ENCODE measurements at regions of chr18 and their contacts with region 1.

Region 1: GRCh38 chr18:51668101-51668500 is 470.6 kb upstream of the MEX3C start:
- DNase-seq: peak; percentile 67 to 81
- H3K4me3 ChIP-seq: no peak overlapping the region
- H3K27ac ChIP-seq: no peak overlapping the region
- H3K4me1 ChIP-seq: peaks cover 0 to 4% (median 0%) of the 10 kb centered on the region in 4 donors
- H3K27me3 ChIP-seq: peaks cover 0 to 25% (median 4%) of the 10 kb centered on the region in 3 donors
- CTCF ChIP-seq: peak in 5 of 7 experiments; percentile 39 to 74 (median 60)
- EP300 ChIP-seq: no peak
- POLR2A ChIP-seq: no peak

Region 2: DNA sequence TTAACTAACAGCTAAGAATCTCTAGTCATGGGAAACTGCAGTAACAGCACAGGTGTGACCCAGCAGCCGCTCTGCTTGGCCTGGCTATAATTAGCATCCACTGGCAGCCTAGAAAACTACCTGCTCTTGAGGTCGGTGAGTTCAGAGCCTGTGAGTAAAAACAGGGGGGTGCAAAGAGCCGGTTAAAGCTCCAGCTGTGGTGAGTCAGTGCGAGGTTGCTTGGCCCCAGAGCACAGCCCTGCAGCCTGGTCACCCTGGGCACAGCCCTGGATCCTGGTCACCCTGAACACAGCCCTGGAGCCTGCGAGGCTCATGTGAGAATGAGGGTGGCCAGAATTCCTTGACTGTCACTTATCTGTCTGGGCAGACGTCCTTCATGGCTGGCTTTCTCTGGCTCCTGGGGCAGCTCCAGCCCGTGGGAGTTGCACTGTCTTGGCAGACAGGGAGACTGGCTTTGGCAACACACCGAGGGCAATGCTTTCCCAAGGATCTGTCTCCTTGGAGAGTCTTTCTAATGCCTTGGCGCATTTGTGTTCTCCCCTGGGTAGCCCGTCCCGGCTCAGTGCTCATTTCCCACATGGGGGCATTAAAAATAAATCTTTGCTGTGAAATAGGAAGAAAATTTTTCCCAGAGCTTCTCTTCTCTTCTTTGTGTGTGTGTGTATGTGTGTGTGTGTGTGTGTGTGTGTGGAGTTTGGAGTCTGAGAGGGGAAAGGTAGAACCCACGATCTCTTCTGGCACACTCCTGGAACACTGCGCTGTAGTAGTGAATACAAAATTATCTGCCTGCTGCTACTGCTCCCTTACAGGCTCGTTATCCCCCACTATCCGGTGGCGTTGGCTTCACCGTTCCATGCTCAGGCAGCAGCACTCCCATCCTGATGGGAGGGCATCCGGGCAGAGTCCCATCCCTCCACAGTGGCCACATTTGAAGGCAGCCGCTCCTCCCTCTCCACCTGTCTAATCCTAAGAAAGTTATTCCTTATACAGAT is 220.5 kb before region 1 on chr18:
- intact Hi-C with region 1: no loop called
- DNase-seq: peak in 1 of 2 donors; percentile 50
- H3K4me3 ChIP-seq: no peak overlapping the region
- H3K27ac ChIP-seq: no peak overlapping the region
- H3K4me1 ChIP-seq: no peaks in the 10 kb centered on the region
- H3K27me3 ChIP-seq: peaks cover 0 to 27% (median 0%) of the 10 kb centered on the region in 3 donors
- CTCF ChIP-seq: no peak
- EP300 ChIP-seq: no peak
- POLR2A ChIP-seq: no peak

Region 3: GRCh38 chr18:52667453-52668058 is 999.5 kb after region 1 on chr18:
- intact Hi-C with region 1: loop called (anchors 10 kb)
- DNase-seq: no peak
- H3K4me3 ChIP-seq: no peak overlapping the region
- H3K27ac ChIP-seq: no peak overlapping the region
- H3K4me1 ChIP-seq: no peaks in the 10 kb centered on the region
- H3K27me3 ChIP-seq: no peaks in the 10 kb centered on the region
- CTCF ChIP-seq: no peak
- EP300 ChIP-seq: no peak
- POLR2A ChIP-seq: no peak

Measured in stomach (tissue), 19 donors.